PC-9 (cell line): ENCODE measurements at regions of chr17 and their contacts with region 1.

Region 1: DNA sequence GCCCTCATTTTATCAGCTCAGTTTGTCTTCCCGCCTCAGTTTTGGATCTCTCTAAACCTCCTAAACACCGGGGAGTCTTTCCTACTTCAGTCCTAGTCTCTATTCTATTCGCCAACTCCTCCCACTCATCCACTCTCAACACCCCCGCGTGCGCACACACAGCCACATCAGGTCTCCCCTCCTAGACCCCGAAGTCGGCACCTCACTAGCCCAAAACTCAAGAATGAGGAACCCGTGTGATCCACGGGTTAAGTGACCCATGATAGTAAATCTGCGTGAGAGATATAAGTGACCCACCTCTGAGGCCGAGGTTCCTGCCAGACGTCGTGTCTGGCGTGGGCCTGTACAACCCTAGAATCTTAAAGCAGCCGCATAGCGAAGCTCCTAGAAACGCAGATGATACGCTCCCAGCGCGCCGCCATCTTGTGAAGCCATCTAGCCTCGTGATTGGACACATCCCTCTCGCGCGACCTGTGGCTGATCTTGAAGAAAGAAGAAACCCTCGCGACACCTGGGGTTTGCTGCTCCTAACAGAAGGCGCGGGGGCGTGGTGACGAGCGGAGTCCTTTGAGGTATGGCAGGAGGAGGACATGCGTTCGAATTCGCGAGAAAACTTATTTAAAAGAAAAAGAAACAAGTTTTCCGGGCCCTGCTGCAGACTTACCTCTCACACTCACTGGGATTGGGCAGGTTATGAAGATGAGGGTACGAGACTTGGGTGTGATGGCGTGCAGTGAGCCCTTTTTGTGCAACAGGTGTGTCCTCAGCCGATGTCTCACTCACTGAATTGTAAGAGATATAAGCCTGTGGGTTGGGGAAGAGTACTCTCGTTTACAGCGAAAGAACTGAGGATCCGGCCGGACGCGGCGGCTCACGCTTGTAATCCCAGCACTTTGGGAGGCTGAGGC is at the start of gene METTL16:
- DNase-seq: peak; percentile 97
- H3K4me3 ChIP-seq: peak within 1 kb of the TSS; percentile 82
- H3K27ac ChIP-seq: peak within 1 kb of the TSS; percentile 94
- H3K4me1 ChIP-seq: peaks cover 13% of the 10 kb centered on the region
- H3K27me3 ChIP-seq: no peaks in the 10 kb centered on the region
- CTCF ChIP-seq: no peak
- total RNA-seq, gene METTL16: 40.2 and 46.2 TPM in 2 replicates

Region 2: GRCh38 chr17:2198927-2199326 is 312.8 kb before region 1 on chr17:
- CTCF ChIA-PET with region 1: no interaction called
- POLR2A ChIA-PET with region 1: no interaction called
- intact Hi-C with region 1: no loop called
- DNase-seq: no peak
- H3K4me3 ChIP-seq: no peak overlapping the region
- H3K27ac ChIP-seq: no peak overlapping the region
- H3K4me1 ChIP-seq: peaks cover 19% of the 10 kb centered on the region
- H3K27me3 ChIP-seq: no peaks in the 10 kb centered on the region
- CTCF ChIP-seq: no peak

Region 3: GRCh38 chr17:2564878-2565277 is 53.2 kb after region 1 on chr17:
- CTCF ChIA-PET with region 1: no interaction called
- POLR2A ChIA-PET with region 1: interaction called, 3 read pairs
- intact Hi-C with region 1: loop called (anchors 2 kb)
- DNase-seq: peak; percentile 69 to 98
- H3K4me3 ChIP-seq: no peak overlapping the region
- H3K27ac ChIP-seq: peak overlapping the region; percentile 80
- H3K4me1 ChIP-seq: peaks cover 14% of the 10 kb centered on the region
- H3K27me3 ChIP-seq: no peaks in the 10 kb centered on the region
- CTCF ChIP-seq: no peak